ENCODE measurements at regions of chr3 and their contacts with region 1.

Region 1: DNA sequence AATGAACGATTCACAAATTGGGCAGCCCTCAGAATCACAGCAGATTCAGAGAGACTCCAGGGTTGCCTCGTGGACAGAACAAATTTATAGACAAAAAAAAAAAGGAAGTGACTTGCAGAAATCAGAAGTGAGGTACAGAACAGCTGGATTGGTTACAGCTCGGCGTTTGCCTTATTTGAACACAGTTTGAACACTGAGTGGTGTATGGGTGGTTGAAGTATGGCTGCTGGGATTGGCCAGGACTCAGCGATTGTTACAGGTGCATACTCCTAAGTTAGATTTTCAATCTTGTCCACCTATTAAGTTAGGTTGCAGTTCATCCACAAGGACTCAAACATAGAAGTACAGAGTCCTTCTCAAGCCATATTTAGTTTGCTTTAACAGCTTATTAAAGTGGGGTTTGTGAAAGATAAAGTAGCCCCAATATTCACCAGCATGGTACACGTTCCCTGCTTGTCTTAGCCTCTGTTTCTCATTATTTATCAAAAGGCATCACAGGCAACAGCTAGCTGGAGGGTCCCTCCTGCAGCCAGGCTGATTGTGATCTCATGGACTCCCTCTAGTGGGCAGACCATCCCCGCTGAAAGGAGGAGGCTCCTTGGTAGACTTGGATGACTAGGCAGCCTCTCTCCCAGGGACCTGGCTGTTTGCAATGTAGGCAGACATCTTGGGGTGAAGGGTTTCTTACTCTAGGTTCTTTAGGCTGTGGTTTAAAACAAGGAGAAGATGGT is 17.6 kb upstream of the ALDH1L1 start:
- DNase-seq: peak; percentile 79
- ATAC-seq: peak; percentile 99
- H3K4me3 Mint-ChIP-seq: no peak overlapping the region
- H3K27ac Mint-ChIP-seq: no peak overlapping the region
- H3K4me1 Mint-ChIP-seq: no peaks in the 10 kb centered on the region
- H3K27me3 Mint-ChIP-seq: peaks cover 16% of the 10 kb centered on the region

Region 2: GRCh38 chr3:125602752-125603649 is 595.0 kb before region 1 on chr3:
- CTCF ChIA-PET with region 1: no interaction called
- POLR2A ChIA-PET with region 1: no interaction called
- intact Hi-C with region 1: no loop called
- DNase-seq: no peak
- ATAC-seq: no peak
- H3K4me3 Mint-ChIP-seq: no peak overlapping the region
- H3K27ac Mint-ChIP-seq: no peak overlapping the region
- H3K4me1 Mint-ChIP-seq: no peaks in the 10 kb centered on the region
- H3K27me3 Mint-ChIP-seq: no peaks in the 10 kb centered on the region

Region 3: DNA sequence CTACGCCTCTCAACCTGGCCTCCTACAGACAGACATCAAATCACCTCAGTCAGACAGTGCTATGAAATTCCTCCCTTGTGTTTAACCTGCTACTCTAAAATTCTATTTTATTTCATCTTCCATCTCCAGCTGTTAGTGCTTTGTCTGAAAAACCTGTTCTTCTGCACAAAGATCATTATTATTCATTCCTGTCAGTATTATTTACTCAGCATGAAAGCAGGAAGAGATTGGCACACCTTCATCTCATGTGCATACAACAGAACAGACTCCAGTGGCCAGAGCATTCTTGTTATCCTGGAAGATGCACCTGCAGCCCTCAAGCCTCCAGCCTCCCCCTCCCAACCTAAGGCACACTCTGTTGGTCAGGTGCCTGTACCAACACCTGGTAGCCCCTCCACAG is 230.9 kb before region 1 on chr3:
- CTCF ChIA-PET with region 1: no interaction called
- POLR2A ChIA-PET with region 1: no interaction called
- intact Hi-C with region 1: loop called in 1 of 2 experiments (anchors 5 kb)
- DNase-seq: no peak
- ATAC-seq: no peak
- H3K4me3 Mint-ChIP-seq: no peak overlapping the region
- H3K27ac Mint-ChIP-seq: no peak overlapping the region
- H3K4me1 Mint-ChIP-seq: peaks cover 4% of the 10 kb centered on the region
- H3K27me3 Mint-ChIP-seq: peaks cover 17% of the 10 kb centered on the region

Region 4: GRCh38 chr3:126134219-126134975 is 63.6 kb before region 1 on chr3:
- CTCF ChIA-PET with region 1: interaction called, 17 read pairs
- POLR2A ChIA-PET with region 1: no interaction called
- intact Hi-C with region 1: loop called (anchors 1 to 5 kb)
- DNase-seq: peak; percentile 76
- ATAC-seq: peak; percentile 71
- H3K4me3 Mint-ChIP-seq: no peak overlapping the region
- H3K27ac Mint-ChIP-seq: no peak overlapping the region
- H3K4me1 Mint-ChIP-seq: no peaks in the 10 kb centered on the region
- H3K27me3 Mint-ChIP-seq: peaks cover 10% of the 10 kb centered on the region

Region 5: DNA sequence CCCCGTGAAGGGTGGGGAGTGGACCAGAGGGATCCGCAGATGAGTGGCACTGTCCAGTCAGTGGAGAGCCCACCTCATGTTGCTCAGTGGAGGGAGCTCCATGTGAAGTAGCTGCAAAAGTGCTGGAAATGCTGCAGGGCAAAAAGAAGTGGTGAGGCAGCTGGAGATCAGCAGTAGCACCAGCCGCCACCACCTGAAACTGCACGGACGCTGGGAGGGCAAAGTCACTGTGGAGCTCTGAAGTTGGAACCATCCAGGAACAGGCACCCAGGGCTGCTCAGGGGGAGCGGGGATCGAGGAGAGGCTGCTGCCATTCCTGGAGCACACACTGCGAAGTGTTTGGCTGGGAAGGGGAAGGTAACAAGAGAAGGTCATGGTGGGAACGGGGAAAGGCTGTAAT is 11.3 kb before region 1 on chr3:
- CTCF ChIA-PET with region 1: interaction called, 20 read pairs
- POLR2A ChIA-PET with region 1: no interaction called
- intact Hi-C with region 1: no loop called
- DNase-seq: no peak
- ATAC-seq: no peak
- H3K4me3 Mint-ChIP-seq: no peak overlapping the region
- H3K27ac Mint-ChIP-seq: no peak overlapping the region
- H3K4me1 Mint-ChIP-seq: no peaks in the 10 kb centered on the region
- H3K27me3 Mint-ChIP-seq: peaks cover 19% of the 10 kb centered on the region

Region 6: DNA sequence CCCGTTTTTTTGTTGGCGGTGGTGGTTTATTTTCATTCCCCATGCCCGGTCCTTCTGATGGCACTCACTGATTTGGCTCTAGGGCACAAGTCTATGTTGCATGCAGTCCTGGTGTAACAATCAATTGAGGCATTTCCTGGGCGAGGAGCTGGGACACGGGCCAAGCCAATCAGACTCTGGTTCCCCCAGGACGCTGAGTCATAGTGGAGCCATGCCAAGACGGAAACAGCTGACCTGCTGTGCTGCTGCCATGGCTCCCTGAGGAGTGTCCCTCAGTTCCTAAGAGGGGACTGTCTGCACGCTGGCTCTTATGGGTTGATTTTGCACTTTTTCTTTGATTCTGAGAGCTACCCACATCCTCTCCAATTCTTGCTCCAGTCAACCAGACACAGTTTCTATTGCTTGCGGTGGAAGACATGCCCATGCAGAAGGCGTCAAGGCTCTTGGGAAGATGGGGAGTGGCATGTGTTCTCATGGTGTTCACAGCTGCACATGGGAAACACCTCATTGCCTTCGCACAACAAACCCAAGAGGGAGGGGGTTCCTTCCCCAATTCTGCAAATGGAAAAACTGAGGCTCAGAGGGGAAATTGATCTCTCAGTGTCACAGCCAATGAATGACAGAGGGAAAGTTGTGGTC is 10.7 kb after region 1 on chr3:
- CTCF ChIA-PET with region 1: interaction called, 12 read pairs
- POLR2A ChIA-PET with region 1: no interaction called
- intact Hi-C with region 1: no loop called
- DNase-seq: no peak
- ATAC-seq: no peak
- H3K4me3 Mint-ChIP-seq: no peak overlapping the region
- H3K27ac Mint-ChIP-seq: no peak overlapping the region
- H3K4me1 Mint-ChIP-seq: peaks cover 2% of the 10 kb centered on the region
- H3K27me3 Mint-ChIP-seq: peaks cover 31% of the 10 kb centered on the region

Region 7: GRCh38 chr3:126321490-126321889 is 123.5 kb after region 1 on chr3:
- CTCF ChIA-PET with region 1: no interaction called
- POLR2A ChIA-PET with region 1: no interaction called
- intact Hi-C with region 1: no loop called
- DNase-seq: no peak
- ATAC-seq: no peak
- H3K4me3 Mint-ChIP-seq: no peak overlapping the region
- H3K27ac Mint-ChIP-seq: no peak overlapping the region
- H3K4me1 Mint-ChIP-seq: no peaks in the 10 kb centered on the region
- H3K27me3 Mint-ChIP-seq: peaks cover 3% of the 10 kb centered on the region